Left cardiac atrium (tissue), 4 donors: ENCODE measurements at regions of chr11 and their contacts with region 1.

Region 1: DNA sequence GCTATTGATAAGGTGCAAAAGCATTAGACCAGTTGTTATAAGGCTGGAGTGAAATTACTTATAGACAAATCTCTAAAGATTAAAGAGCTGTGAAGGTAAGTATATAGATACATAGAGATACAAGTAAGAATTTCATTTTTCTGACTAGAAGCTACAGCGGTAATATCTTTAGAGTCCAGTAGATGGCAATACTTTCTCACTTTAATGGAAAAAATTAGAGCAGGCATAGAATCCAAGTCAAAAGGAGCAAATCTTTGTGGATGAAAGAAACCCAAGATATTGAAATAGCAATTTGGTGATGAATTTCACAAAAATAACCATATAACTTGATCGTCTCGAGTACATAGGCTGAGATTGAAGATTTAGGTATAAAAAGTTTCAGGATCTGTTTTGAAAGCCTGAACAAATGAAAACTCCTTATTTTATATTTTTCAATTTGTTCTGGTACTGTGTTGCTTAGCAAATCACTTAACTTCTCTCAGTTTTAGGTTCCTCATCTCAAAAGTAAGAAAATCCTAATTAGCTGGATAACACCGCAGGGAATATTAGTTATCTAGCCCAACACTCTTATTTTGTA is 81.9 kb downstream of the UVRAG start:
- DNase-seq: no peak
- ATAC-seq: peak in 1 of 2 donors; percentile 56

Region 2: DNA sequence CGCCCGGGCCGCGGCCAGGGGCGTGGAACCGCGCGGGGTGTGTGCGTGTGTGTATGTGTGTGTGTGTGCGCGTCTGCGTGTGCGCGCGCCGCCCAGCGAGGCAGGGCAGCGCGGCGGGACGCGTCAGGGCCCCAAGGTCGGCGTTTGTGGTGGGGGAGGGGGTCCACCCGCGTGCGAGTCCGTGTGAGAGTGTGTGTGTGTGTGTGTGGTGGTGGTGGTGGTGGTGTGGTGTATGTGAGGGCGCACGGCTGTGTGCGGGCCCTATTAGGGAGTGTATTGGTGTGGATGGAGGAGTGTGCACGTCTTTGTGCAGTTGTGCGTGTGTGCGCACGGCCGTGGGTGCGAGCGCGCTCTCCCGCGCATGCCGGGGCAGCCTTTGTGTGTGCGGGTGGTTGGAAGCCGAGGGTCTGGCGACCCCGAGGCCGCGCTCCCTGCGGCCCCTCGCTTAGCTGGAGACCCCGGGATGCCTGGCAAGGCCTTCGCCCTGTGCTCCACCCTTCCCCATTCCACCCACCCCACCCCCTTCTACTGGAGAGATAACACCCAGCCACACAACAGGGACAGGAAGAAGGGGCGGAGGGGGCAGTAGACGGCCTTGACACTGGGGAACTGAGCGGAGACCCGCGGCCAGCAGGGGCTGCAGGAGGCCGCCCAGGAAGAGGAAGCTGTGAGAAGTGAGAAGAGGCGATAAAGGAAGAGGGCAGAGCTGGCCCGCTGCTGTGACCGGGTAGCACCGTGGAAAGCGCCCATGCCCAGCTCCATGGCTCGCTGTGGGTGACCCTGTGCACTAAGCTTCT is 544.9 kb before region 1 on chr11:
- intact Hi-C with region 1: no loop called
- DNase-seq: peak; percentile 75
- ATAC-seq: peak; percentile 47 to 61

Region 3: GRCh38 chr11:75966546-75967287 is 69.8 kb after region 1 on chr11:
- intact Hi-C with region 1: no loop called
- DNase-seq: no peak
- ATAC-seq: peak in 1 of 2 donors; percentile 58

Region 4: DNA sequence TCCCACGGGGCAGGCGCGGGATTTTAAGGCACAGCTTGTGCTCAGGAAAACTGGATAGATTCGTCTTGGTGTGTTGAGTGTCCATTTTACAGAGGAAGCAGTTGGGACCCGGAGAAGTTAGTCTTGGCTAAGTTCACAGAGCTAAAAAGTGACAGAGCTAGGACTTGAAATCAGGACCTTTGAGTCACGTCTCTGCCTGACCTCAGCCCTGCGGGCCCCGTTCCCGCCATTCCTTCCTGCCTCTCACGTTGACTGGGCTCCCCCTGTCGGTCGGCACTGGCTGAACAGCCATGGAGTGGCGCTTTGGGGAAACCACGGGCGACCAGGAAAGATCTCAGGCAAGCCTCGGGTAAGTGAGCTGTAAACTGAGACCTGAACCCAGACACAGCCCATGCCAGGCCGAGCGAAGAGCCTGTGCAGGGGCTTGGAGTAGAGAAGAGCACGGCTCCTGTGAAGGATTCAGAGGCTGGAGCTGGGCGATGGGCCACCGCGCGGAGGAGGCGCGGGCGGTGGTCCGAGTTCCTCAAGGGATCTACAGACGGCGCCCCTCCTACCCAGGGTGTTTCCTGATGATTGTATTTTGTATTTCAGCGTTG is 255.3 kb after region 1 on chr11:
- intact Hi-C with region 1: loop called (anchors 2 to 5 kb)
- DNase-seq: peak; percentile 92
- ATAC-seq: peak; percentile 89 to 92

Region 5: DNA sequence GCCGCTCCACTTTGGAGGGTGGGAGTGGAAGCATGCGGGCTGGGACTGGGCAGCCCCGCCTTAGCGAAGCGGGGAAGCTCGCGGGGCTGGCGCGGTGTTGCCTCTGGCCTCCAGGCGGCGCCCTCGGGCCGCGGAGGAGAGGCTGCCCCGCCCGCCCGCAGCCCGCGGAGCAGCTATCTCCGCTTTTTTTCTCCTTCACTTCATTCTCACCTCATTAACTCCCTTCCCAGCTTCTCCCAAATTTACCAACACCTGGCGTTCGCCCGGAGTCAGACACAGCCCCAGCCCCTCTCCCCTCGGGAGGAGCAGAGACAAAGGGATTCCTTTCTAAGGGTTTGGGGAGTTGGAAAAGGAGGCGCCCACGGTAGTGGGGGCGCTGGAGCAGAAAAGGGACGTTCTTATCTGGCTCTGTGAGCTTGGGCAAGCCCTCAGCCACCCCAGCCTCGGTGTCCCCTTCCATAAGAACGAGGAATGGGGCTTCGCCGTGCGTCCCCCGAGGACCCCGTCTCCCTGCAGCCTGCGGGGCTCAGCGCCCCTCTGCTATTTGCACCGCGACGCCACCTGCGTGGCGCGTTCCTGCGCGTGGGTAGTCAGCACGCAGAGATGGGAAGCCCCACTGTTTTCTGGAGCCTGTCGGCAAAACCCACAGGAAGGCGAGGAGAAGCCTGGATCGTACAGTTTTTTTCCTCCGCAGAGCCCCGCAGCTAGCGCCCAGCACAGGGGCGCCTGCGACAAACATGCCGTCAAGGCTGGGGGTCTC is 310.9 kb after region 1 on chr11:
- intact Hi-C with region 1: loop called in 1 of 2 experiments (anchors 2 kb)
- DNase-seq: peak; percentile 84
- ATAC-seq: peak; percentile 71 to 80

Region 6: DNA sequence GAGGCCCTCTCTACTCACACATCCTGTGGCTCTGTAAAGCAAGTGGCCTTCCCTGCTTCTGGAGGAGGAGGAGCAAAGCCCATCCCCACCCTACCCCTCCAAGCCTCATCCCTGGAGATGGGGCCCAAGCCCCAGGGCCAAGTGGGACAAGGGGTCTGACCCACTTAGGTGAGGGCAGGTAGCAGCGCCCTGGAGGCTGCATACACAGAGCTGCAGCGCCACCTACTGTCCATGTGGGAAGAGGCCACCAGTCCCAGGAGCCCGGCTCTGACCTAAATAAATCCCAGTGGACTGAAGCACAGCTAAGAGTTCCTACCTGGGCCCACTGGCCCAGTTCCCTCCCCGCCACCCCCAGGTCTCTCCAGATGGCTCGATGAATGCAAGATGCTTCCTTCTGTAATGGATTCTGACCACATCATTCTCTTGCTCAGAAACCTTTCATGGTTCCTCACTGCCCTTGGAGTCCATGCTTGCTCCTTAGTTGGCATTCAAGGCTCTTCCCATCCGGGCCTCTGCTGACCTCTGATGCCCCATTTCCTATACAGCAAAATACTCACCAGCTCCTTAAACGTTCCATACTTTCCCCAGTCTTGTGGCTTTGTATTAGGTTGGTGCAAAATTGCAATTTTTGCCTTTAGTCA is 421.9 kb after region 1 on chr11:
- intact Hi-C with region 1: loop called in 1 of 2 experiments (anchors 5 kb)
- DNase-seq: peak; percentile 87
- ATAC-seq: peak; percentile 86 to 89